Ovary (tissue), 10 donors: ENCODE measurements at regions of chr2 and their contacts with region 1.

Region 1: DNA sequence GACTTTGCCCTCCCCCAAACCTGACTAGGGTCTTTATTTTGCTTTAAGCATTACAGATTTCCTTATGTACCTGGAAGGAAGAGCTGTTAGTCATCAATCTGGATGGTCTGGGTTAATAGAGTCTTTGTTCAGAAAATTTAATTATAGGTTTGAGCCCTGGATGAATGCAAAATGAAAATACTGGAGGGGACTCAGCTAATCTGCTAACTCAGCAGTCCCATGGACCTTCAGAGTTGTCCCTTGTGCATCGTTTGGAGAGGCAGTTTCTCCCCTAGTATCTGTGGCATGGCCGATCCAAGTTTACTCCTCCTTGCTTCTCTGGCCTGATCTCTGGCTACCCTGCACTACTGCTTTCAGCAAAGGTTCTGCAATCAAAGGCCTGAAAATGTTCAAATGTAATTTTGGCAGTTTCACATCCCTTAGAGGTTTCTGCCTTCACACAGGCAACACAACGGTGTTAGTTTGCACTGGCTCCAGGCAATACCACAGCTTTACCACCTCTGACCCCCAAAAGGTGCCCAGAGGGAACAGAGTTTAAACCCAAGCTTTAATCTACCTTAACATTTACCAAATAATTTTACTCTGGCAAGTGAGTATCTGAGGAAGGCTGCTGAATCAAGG is 134.3 kb downstream of the THADA start:
- DNase-seq: no peak
- H3K4me3 ChIP-seq: no peak overlapping the region
- H3K27ac ChIP-seq: peak overlapping the region in 1 of 2 donors; percentile 49
- H3K4me1 ChIP-seq: peaks cover 21% of the 10 kb centered on the region
- H3K27me3 ChIP-seq: no peaks in the 10 kb centered on the region
- CTCF ChIP-seq: no peak
- EP300 ChIP-seq: no peak
- POLR2A ChIP-seq: no peak

Region 2: DNA sequence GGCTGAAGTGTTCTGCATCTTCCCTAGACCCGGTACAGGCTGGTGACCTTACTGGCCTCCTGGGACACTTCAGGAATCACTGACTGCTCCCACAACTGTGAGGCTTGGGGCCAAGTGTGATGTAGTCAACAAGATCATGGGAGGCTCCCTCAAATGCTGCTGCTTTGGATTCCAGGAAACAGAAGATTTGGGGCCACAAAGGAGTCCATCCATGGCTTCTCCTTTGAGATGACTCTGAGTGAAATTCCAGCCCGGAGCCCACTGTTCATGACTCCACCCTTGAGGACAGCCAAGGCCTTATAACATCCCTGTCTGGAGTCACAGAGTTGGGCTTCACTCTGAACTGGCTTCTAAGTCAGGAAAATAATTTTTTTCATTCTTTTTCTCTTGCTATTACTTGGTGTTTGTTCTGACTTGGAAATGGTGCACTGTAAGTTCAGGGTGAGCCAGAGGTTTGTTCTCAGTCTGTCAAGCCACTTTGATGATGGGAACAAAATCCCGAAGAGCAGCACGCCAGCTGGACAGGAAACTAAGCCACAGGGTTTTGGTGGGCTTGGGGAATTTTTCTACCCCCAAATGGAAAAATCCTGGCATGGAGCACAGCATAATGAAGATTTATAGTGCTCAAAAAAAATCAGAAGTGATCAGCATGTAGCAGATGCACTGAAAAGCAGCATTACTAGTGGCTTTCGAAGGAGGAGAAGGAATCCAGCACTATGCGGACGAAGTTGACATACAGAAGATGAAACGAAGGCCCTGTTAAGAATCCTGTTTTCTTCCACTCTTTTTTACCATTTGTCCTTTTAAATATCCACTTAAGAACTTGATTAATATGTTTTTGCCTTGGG is 137.1 kb before region 1 on chr2:
- intact Hi-C with region 1: loop called in 1 of 4 experiments (anchors 10 kb)
- DNase-seq: peak in 4 of 5 donors; percentile 62 to 71 (median 69)
- H3K4me3 ChIP-seq: no peak overlapping the region
- H3K27ac ChIP-seq: peak overlapping the region; percentile 27 to 51
- H3K4me1 ChIP-seq: peaks cover 13% of the 10 kb centered on the region
- H3K27me3 ChIP-seq: no peaks in the 10 kb centered on the region
- CTCF ChIP-seq: no peak
- EP300 ChIP-seq: no peak
- POLR2A ChIP-seq: no peak